ENCODE measurements at regions of chr7 and their contacts with region 1.

Region 1: DNA sequence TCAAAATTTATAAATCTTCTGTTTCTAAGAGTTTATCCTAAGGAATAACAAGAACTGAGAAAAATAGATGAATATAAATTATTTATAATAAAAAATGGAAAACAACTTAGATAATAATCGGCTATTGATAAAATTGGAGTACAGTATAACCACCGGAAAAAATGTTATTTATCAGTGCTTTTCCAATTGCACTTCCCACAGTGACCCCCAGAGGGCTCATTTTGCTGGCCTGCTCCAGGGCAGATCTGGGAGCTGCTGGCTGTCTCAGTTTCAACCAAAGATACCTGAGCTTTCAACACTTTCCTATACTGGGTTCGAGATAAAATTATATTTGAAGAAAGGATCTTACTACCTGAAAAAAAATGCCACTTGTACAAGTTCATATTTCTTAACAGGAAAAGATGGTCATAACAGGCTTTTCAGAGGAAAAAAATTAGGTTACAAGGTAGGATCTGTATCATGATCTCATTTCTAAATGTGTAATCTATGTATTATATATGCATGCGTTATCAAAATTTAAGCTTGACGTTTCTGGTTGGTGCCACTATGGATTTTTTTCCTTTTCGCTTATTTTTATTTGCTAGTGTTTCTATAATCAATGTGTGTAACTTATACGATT is 165.7 kb downstream of the NPSR1 start:
- DNase-seq: peak; percentile 25
- H3K4me3 ChIP-seq: no peak overlapping the region
- H3K27ac ChIP-seq: no peak overlapping the region
- H3K4me1 ChIP-seq: no peaks in the 10 kb centered on the region
- H3K27me3 ChIP-seq: no peaks in the 10 kb centered on the region
- CTCF ChIP-seq: peak; percentile 85 to 91

Region 2: GRCh38 chr7:34916267-34916666 is 92.5 kb after region 1 on chr7:
- CTCF ChIA-PET with region 1: no interaction called
- dilution Hi-C with region 1: no loop called
- in situ Hi-C with region 1: no loop called
- intact Hi-C with region 1: no loop called
- DNase-seq: no peak
- H3K4me3 ChIP-seq: no peak overlapping the region
- H3K27ac ChIP-seq: no peak overlapping the region
- H3K4me1 ChIP-seq: no peaks in the 10 kb centered on the region
- H3K27me3 ChIP-seq: no peaks in the 10 kb centered on the region
- CTCF ChIP-seq: no peak

Region 3: DNA sequence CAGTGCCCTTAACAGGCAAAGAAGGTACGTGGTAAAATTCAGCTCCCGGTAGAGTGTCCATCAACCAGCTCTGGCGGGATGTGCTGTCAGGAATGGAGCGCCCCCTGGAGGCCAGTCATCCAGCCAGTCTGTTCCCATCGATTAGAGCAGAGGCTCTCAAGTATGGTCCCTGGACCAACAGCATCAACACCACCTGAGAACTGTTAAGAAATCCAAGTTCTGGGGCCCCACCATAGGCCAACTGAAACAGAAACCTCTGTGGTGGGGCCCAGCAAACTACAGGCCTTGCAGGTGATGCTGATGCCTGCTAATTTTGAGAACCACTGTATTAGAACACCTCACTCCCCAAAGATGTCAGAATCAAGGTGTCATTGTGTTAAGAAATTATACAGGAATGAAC is 104.3 kb after region 1 on chr7:
- CTCF ChIA-PET with region 1: no interaction called
- dilution Hi-C with region 1: no loop called
- in situ Hi-C with region 1: no loop called
- intact Hi-C with region 1: loop called (anchors 5 kb)
- DNase-seq: peak; percentile 9
- H3K4me3 ChIP-seq: no peak overlapping the region
- H3K27ac ChIP-seq: no peak overlapping the region
- H3K4me1 ChIP-seq: no peaks in the 10 kb centered on the region
- H3K27me3 ChIP-seq: no peaks in the 10 kb centered on the region
- CTCF ChIP-seq: peak; percentile 46 to 64

Region 4: GRCh38 chr7:34939175-34939574 is 115.4 kb after region 1 on chr7:
- CTCF ChIA-PET with region 1: no interaction called
- dilution Hi-C with region 1: loop called (anchors 5 kb)
- in situ Hi-C with region 1: no loop called
- intact Hi-C with region 1: no loop called
- DNase-seq: no peak
- H3K4me3 ChIP-seq: no peak overlapping the region
- H3K27ac ChIP-seq: no peak overlapping the region
- H3K4me1 ChIP-seq: no peaks in the 10 kb centered on the region
- H3K27me3 ChIP-seq: no peaks in the 10 kb centered on the region
- CTCF ChIP-seq: no peak

Measured in mammary epithelial cell (primary cell).